AG04449 (cell line): ENCODE measurements at regions of chrX and their contacts with region 1.

Region 1: GRCh38 chrX:68807818-68808217 is 21.0 kb upstream of the EFNB1 start:
- DNase-seq: no peak
- H3K4me3 ChIP-seq: no peak overlapping the region
- CTCF ChIP-seq: peak; percentile 3

Region 2: DNA sequence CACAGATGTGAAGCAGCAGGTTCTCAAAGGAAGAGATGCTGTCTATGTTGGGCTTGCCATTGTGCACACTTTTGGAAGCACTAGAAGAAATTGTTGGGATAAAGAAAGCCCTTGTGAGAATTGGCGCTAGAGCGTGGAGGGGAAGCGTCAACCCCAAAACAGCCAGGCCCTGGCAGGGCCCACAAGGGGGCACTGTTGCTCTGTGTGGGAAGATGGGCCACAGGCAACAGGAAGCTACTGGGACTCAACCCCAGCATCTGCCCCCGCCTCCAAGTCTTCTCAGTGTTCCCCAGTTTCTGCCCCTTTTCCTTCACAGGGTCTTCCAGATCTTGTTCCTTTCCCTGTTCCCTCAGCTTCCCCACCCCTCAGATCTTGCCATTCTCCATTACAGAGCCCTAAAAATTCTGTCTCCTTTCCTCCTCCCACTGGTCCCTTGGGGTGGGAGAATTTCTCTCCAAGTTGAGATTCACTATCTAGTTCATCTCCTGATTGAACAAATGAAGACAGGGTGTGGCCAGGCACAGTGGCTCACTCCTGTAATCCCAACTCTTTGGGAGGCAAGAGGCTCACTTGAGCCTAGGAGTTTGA is 74.8 kb before region 1 on chrX:
- CTCF ChIA-PET with region 1: interaction called, 57 read pairs
- POLR2A ChIA-PET with region 1: no interaction called
- DNase-seq: no peak
- H3K4me3 ChIP-seq: no peak overlapping the region
- CTCF ChIP-seq: peak; percentile 70